ENCODE measurements at regions of chr11 and their contacts with region 1.

Region 1: GRCh38 chr11:61079416-61080150 is 22.7 kb upstream of the CD5 start:
- DNase-seq: no peak
- ATAC-seq: no peak
- H3K4me3 ChIP-seq: no peak overlapping the region
- H3K27ac ChIP-seq: peak overlapping the region in 1 of 10 donors; percentile 38
- H3K4me1 ChIP-seq: peaks cover 0 to 20% (median 0%) of the 10 kb centered on the region in 9 donors
- H3K27me3 ChIP-seq: peaks cover 0 to 20% (median 0%) of the 10 kb centered on the region in 7 donors
- CTCF ChIP-seq: no peak

Region 2: GRCh38 chr11:61091373-61092279 is 12.0 kb after region 1 on chr11:
- intact Hi-C with region 1: loop called in 1 of 10 experiments (anchors 2 kb)
- DNase-seq: no peak
- ATAC-seq: no peak
- H3K4me3 ChIP-seq: no peak overlapping the region
- H3K27ac ChIP-seq: peak overlapping the region in 1 of 10 donors; percentile 66
- H3K4me1 ChIP-seq: peaks cover 0 to 22% (median 0%) of the 10 kb centered on the region in 9 donors
- H3K27me3 ChIP-seq: no peaks in the 10 kb centered on the region
- CTCF ChIP-seq: no peak